ENCODE measurements at regions of chr18 and their contacts with region 1.

Region 1: DNA sequence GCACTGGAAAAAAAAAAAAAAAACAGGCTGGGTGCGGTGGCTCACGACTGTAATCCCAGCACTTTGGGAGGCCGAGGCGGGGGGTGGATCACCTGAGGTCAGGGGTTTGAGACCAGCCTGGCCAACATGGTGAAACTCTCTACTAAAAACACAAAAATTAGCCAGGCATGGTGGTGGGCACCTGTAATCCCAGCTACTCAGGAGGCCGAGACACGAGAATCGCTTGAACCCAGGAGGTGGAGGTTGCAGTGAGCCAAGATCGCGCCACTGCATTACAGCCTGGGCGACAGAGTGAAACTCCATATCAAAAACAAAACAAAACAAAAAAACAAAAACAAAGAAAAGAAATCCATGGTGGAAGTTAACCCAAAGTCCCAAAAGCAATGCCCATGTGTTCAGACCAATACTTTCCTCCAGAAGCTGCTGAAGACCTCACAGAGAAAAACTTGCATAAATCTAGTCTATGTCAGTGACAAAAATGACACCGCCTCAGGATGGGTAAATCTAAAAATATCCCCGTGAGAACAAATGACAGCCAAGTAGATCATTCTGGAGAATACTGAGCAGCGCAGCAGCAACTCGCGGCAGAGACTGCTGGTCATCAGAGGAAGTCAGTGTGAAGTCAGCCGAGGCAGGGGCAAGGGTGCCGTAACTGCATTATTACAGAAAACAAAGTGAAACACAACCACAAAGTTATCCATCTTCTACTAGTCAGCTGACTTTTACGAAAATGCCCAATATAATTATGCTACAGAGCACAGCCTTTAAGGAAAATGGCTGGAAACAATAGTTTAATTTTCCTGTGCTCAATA is 41.0 kb downstream of the LPIN2 start:
- DNase-seq: peak; percentile 76
- CTCF ChIP-seq: no peak

Region 2: DNA sequence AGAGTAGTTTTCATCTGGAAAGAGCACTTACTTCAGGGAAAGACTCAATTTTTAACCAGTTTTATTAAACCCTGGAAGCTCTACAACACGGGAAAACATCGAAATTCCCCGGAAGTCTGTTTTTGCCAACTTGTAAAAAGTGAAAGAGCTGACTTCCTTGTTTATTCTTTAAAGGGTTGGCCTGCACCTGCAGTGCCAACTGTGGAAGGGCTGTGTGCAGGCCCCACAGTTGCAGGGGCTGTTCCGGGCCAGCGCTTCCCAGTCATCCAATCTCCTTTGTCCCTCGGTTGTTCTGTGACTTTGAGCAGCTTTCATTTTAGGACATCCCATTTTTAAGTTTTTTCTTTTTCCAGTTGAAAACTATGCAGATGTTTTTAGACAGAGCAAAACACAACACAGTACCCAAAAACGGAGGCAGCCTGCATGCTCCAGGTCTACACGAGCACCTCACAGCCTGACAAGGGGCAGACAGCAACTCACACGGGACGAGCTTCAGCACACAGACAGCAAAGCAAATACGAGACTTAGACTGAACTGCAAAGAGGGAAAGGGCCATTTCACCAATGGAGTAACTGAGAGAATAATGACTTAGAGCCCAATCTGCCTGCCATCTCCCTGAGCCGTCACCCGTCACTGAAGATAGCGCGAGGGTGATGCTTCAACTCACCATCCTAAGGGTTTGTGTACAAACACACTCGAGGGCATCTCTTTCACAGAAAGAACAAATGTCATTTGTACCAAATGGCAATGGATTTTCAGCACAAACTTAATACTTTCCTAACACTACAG is 54.5 kb before region 1 on chr18:
- CTCF ChIA-PET with region 1: no interaction called
- POLR2A ChIA-PET with region 1: no interaction called
- DNase-seq: no peak
- CTCF ChIP-seq: no peak

Region 3: DNA sequence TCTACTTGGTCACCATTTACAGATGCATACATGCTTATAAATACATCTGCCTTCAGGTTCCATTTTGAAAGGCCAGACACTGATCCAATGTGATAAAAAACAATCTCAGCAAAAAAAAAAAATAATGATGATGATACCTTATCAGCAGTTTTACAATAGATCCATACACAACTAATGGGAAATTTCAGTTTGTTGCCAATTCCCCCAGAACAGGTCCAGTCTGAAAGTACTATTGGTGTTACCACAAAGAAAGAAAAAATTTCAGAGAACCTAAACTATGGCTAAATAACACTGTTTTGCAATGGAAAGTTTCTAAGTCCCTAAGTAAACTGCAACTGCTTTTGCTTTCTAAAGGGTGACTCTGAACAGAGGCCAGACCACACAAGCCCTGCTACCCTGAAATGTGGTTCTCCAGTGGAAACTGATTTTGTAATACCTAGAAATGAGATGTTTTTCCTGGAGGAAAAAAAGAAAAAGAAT is 13.1 kb before region 1 on chr18:
- CTCF ChIA-PET with region 1: interaction called, 14 read pairs
- POLR2A ChIA-PET with region 1: no interaction called
- DNase-seq: peak; percentile 46
- CTCF ChIP-seq: no peak

Region 4: GRCh38 chr18:2985628-2986027 is 13.7 kb after region 1 on chr18:
- CTCF ChIA-PET with region 1: interaction called, 82 read pairs
- POLR2A ChIA-PET with region 1: interaction called, 5 read pairs
- DNase-seq: peak; percentile 44
- CTCF ChIP-seq: peak; percentile 51

Region 5: GRCh38 chr18:2994603-2995432 is 22.9 kb after region 1 on chr18:
- CTCF ChIA-PET with region 1: interaction called, 82 read pairs
- POLR2A ChIA-PET with region 1: no interaction called
- DNase-seq: peak; percentile 60
- CTCF ChIP-seq: peak; percentile 68

Measured in GM10248 (cell line).